Caco-2 (cell line): ENCODE measurements at regions of chr11 and their contacts with region 1.

Region 1: DNA sequence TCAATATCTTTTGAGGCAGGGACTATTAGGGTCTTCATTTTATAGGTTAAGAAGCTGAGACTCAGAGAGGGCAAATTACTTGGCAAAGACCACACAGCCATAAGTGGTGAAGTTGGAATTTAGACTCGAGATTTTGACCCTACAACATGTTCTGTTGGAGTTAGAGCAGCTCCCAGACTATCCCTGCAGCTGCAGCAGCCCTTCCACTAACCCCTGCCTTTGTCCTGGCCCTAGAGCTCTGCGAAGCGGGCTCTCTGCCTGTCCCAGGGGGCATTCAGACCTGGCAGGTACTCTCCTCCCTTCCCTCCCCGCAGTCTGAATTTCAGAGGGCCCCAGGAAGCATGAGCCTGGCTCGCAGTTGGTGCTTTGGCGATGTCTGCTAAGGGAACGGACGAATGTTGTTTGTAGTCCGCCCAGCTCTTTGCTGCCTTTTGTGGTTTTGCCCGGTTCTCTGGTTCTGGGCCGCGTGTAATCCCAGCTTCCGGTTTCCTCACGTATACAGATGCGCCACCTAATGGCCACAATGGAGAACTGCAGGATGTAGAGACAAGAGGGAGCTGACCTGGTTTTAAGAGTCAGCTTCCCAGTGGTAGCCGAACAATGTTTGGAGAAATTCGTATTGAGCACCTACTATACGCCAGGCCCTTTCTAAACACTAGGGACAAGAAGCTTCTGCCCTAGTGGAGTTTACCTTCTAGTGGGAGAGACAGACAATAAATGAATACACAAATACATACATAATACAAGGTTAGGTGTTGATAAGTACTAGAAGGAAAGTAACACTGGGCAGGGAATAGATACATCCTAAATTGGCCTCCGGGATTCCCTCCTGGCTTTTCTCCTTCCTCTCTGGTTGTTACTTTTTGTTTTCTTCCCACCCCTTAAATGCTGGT is 125.2 kb downstream of the ST3GAL4 start:
- DNase-seq: peak; percentile 83 to 86
- H3K4me3 ChIP-seq: no peak overlapping the region
- H3K4me3 Mint-ChIP-seq: peak overlapping the region; percentile 56
- H3K27ac Mint-ChIP-seq: peak overlapping the region; percentile 61
- H3K4me1 ChIP-seq: peaks cover 6% of the 10 kb centered on the region
- H3K4me1 Mint-ChIP-seq: peaks cover 6% of the 10 kb centered on the region
- H3K27me3 ChIP-seq: peaks cover 4% of the 10 kb centered on the region
- H3K27me3 Mint-ChIP-seq: peaks cover 30% of the 10 kb centered on the region
- CTCF ChIP-seq: peak; percentile 92 to 98

Region 2: DNA sequence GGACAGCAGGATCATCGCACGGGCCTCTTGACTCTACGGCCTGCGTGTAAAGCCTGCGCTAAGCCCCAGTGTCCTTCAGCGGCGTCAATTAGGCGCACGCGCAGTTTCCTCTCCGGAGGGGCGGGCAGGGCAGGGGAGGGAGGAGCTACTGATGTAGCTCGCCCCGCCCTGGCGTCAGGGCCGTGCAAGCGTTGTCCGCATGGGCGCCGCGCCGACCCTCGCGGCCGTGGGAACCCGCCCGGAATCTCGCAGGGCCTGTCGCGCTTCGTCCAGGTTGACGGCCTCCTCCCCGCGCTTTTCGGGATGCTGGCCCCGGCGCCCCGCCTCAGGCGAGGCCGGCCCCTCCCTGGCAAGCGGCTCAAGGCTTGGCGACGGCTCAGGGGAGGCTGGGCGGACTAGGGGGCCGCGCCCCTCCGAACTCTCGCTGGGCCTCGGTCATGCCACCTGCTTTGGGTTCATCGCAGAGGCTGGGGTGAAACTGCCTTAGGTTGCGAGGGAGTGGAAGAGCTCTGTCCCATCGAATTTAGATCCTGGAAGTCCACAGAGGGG is 64.0 kb before region 1 on chr11:
- CTCF ChIA-PET with region 1: interaction called, 15 read pairs
- POLR2A ChIA-PET with region 1: no interaction called
- intact Hi-C with region 1: no loop called
- DNase-seq: peak; percentile 80 to 90
- H3K4me3 ChIP-seq: peak overlapping the region; percentile 48
- H3K4me3 Mint-ChIP-seq: peak overlapping the region; percentile 60
- H3K27ac Mint-ChIP-seq: peak overlapping the region; percentile 34
- H3K4me1 ChIP-seq: peaks cover 5% of the 10 kb centered on the region; the same call in 1 of the 2 replicates
- H3K4me1 Mint-ChIP-seq: no peaks in the 10 kb centered on the region
- H3K27me3 ChIP-seq: no peaks in the 10 kb centered on the region
- H3K27me3 Mint-ChIP-seq: no peaks in the 10 kb centered on the region
- CTCF ChIP-seq: no peak

Region 3: DNA sequence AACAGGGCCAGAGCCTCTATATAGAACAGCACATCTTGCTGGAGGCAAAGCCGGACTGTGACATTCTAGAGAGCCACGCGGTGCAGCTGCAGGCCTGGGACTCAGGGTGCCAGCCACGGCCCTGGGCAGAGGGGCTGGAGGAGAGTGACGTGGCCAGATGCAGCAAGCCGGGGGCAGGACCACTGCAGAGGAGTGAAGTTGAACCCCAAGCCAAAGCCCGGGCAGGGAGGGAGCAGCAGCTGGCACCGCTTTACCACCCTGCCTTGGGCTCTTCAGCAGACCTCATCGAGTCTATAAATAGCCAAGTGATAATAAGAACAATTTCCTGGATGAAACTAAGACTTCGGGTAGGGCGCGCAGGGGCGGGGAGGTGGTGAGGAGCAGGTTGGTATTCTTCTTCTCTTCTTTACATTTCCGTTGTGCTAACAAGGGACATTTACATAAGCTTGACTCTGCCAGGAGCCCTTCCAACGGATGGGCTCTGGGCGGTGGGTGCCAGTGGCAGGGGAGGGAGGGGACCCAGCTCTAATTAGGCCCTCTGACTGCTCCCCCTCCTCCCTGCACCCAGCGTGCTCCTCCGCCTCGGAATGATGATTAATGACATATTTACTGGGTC is 15.0 kb before region 1 on chr11:
- CTCF ChIA-PET with region 1: interaction called, 10 read pairs
- POLR2A ChIA-PET with region 1: no interaction called
- intact Hi-C with region 1: no loop called
- DNase-seq: no peak
- H3K4me3 ChIP-seq: no peak overlapping the region
- H3K4me3 Mint-ChIP-seq: no peak overlapping the region
- H3K27ac Mint-ChIP-seq: no peak overlapping the region
- H3K4me1 ChIP-seq: no peaks in the 10 kb centered on the region
- H3K4me1 Mint-ChIP-seq: no peaks in the 10 kb centered on the region
- H3K27me3 ChIP-seq: peaks cover 7% of the 10 kb centered on the region
- H3K27me3 Mint-ChIP-seq: peaks cover 30% of the 10 kb centered on the region
- CTCF ChIP-seq: no peak

Region 4: DNA sequence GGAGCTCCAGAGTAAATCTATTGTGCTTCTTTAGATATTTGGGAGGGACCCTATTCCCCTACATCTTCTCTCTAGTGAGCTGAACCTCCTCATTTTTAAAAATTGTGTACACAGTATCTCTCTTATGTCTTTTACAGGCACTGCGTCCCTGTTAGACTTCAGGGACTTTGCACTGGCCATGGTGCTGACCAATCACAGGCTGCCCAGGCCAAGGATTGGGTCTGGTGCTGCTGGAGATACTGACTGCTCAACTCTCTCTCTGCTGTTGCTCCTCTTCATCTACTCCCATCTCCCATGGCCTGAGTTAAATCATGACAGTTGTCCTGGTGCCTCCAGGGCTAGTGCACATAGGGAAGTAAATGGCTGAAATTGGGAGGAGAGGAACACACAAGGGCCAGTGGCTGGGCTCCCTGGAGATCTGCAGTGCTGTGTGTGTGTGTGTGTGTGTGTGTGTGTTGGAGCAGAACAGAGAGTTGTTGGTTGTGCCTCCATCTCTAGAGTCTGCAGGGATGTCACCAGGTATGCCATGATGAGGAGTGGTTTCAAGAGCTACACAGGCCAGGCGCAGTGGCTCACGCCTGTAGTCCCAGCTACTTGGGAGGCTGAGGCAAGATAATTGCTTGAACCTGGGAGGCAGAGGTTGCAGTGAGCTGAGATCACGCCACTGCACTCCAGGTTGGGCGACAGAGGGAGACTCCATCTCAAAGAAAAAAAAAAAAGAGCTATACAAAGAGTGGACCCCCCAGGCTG is 30.1 kb after region 1 on chr11:
- CTCF ChIA-PET with region 1: no interaction called
- POLR2A ChIA-PET with region 1: no interaction called
- intact Hi-C with region 1: no loop called
- DNase-seq: no peak
- H3K4me3 ChIP-seq: no peak overlapping the region
- H3K4me3 Mint-ChIP-seq: no peak overlapping the region
- H3K27ac Mint-ChIP-seq: no peak overlapping the region
- H3K4me1 ChIP-seq: no peaks in the 10 kb centered on the region
- H3K4me1 Mint-ChIP-seq: no peaks in the 10 kb centered on the region
- H3K27me3 ChIP-seq: peaks cover 3% of the 10 kb centered on the region; the same call in 1 of the 2 replicates
- H3K27me3 Mint-ChIP-seq: peaks cover 38% of the 10 kb centered on the region
- CTCF ChIP-seq: no peak